ENCODE measurements at regions of chr11 and their contacts with region 1.

Region 1: GRCh38 chr11:44611687-44612434 is 46.4 kb downstream of the CD82 start:
- DNase-seq: no peak
- ATAC-seq: no peak
- H3K4me3 ChIP-seq: no peak overlapping the region
- H3K27ac ChIP-seq: no peak overlapping the region
- H3K4me1 ChIP-seq: peaks cover 0 to 5% of the 10 kb centered on the region in 2 experiments; a peak in 1 of 4 replicates
- H3K27me3 ChIP-seq: no peaks in the 10 kb centered on the region
- CTCF ChIP-seq: no peak
- POLR2A ChIP-seq: no peak
- RAD21 ChIP-seq: no peak

Region 2: GRCh38 chr11:44143943-44144909 is 467.6 kb before region 1 on chr11:
- CTCF ChIA-PET with region 1: no interaction called
- POLR2A ChIA-PET with region 1: no interaction called
- RAD21 ChIA-PET with region 1: no interaction called
- intact Hi-C with region 1: loop called (anchors 10 kb)
- DNase-seq: peak; percentile 15
- ATAC-seq: peak; percentile 79
- H3K4me3 ChIP-seq: no peak overlapping the region
- H3K27ac ChIP-seq: no peak overlapping the region
- H3K4me1 ChIP-seq: peaks cover 9 to 14% of the 10 kb centered on the region in 2 experiments; a peak in 3 of 4 replicates
- H3K27me3 ChIP-seq: no peaks in the 10 kb centered on the region
- CTCF ChIP-seq: no peak
- POLR2A ChIP-seq: no peak
- RAD21 ChIP-seq: no peak

Region 3: DNA sequence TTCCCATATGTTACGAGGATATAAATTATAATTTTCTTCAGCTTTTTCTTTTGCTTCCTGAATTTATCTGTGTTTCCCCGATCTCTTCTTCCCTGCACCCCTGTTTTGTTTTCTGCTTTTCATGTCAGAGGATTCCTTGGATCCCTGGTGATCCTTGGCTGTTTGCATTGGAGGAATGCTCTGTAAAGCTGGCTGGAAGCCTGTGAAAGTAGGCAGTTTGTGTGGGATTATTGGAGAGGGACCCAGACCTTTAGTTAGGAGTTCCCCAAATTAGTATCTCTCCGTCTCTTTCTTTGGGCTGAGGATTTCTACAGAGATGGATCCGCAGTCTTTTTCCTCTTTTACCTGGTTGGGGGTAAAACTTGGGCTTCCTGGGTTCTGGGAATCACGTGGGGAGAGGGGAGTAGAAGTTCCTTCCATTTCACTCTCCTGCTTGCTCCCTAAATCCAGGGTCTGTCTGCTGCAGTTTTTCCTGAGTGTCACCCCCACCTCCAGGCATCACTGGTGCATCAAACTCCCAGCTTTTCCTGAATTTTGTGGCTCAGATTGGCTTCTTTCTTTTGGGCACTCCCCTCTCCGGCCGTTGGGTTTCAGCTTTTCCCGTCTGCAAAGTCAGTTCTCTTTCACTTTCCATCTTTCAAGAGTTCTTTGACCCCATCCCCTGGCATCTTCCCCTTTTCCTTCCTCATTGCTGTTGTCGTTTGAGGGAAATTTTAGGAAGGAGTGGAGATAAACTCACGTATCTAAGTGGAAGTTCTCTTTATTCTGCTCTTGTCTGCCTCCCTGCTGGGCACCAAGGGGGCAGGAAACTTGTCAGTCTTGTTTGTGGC is 222.8 kb before region 1 on chr11:
- CTCF ChIA-PET with region 1: no interaction called
- POLR2A ChIA-PET with region 1: no interaction called
- RAD21 ChIA-PET with region 1: no interaction called
- intact Hi-C with region 1: no loop called
- DNase-seq: no peak
- ATAC-seq: no peak
- H3K4me3 ChIP-seq: no peak overlapping the region
- H3K27ac ChIP-seq: no peak overlapping the region
- H3K4me1 ChIP-seq: no peaks in the 10 kb centered on the region
- H3K27me3 ChIP-seq: peaks cover 2% of the 10 kb centered on the region; the same call in 1 of the 2 replicates
- CTCF ChIP-seq: no peak
- POLR2A ChIP-seq: no peak
- RAD21 ChIP-seq: no peak

Region 4: GRCh38 chr11:44409558-44410236 is 202.2 kb before region 1 on chr11:
- CTCF ChIA-PET with region 1: no interaction called
- POLR2A ChIA-PET with region 1: no interaction called
- RAD21 ChIA-PET with region 1: no interaction called
- intact Hi-C with region 1: no loop called
- DNase-seq: no peak
- ATAC-seq: no peak
- H3K4me3 ChIP-seq: no peak overlapping the region
- H3K27ac ChIP-seq: no peak overlapping the region
- H3K4me1 ChIP-seq: 0 out of 4 replicates have a peak, but pooled peaks cover 0 to 6% of the 10 kb centered on the region in 2 experiments
- H3K27me3 ChIP-seq: peaks cover 28% of the 10 kb centered on the region; the same call in 1 of the 2 replicates
- CTCF ChIP-seq: no peak
- POLR2A ChIP-seq: no peak
- RAD21 ChIP-seq: no peak

Region 5: GRCh38 chr11:44556735-44557409 is 55.0 kb before region 1 on chr11:
- CTCF ChIA-PET with region 1: interaction called, 138 read pairs
- POLR2A ChIA-PET with region 1: interaction called, 4 read pairs
- RAD21 ChIA-PET with region 1: interaction called, 19 to 28 read pairs
- intact Hi-C with region 1: loop called (anchors 1 kb)
- DNase-seq: peak; percentile 54
- ATAC-seq: peak; percentile 94
- H3K4me3 ChIP-seq: no peak overlapping the region
- H3K27ac ChIP-seq: no peak overlapping the region
- H3K4me1 ChIP-seq: peaks cover 9 to 12% of the 10 kb centered on the region in 2 experiments; a peak in 3 of 4 replicates
- H3K27me3 ChIP-seq: no peaks in the 10 kb centered on the region
- CTCF ChIP-seq: peak; percentile 65 to 95 (median 79)
- POLR2A ChIP-seq: no peak
- RAD21 ChIP-seq: peak; percentile 93